ENCODE measurements at regions of chr2 and their contacts with region 1.

Region 1: GRCh38 chr2:73156539-73157124 is 43.9 kb upstream of the RAB11FIP5 start:
- DNase-seq: peak; percentile 90
- H3K4me3 ChIP-seq: no peak overlapping the region
- H3K27ac ChIP-seq: no peak overlapping the region
- H3K4me1 ChIP-seq: peaks cover 5 to 9% (median 7%) of the 10 kb centered on the region in 4 donors
- H3K27me3 ChIP-seq: peaks cover 0 to 42% (median 8%) of the 10 kb centered on the region in 4 donors
- CTCF ChIP-seq: peak; percentile 67 to 76 (median 73)
- EP300 ChIP-seq: no peak
- POLR2A ChIP-seq: no peak

Region 2: GRCh38 chr2:73085691-73086360 is 70.8 kb before region 1 on chr2:
- intact Hi-C with region 1: loop called (anchors 2 kb)
- DNase-seq: peak; percentile 97
- H3K4me3 ChIP-seq: no peak overlapping the region
- H3K27ac ChIP-seq: no peak overlapping the region
- H3K4me1 ChIP-seq: peaks cover 22 to 42% (median 34%) of the 10 kb centered on the region in 4 donors
- H3K27me3 ChIP-seq: no peaks in the 10 kb centered on the region
- CTCF ChIP-seq: peak; percentile 86 to 98 (median 92)
- EP300 ChIP-seq: no peak
- POLR2A ChIP-seq: no peak

Region 3: GRCh38 chr2:73187549-73187948 is 30.9 kb after region 1 on chr2:
- intact Hi-C with region 1: no loop called
- DNase-seq: no peak
- H3K4me3 ChIP-seq: no peak overlapping the region
- H3K27ac ChIP-seq: no peak overlapping the region
- H3K4me1 ChIP-seq: no peaks in the 10 kb centered on the region
- H3K27me3 ChIP-seq: peaks cover 0 to 20% (median 0%) of the 10 kb centered on the region in 4 donors
- CTCF ChIP-seq: no peak
- EP300 ChIP-seq: no peak
- POLR2A ChIP-seq: no peak

Measured in esophagus muscularis mucosa (tissue), 4 donors.